Pancreas (tissue), 10 donors: ENCODE measurements at regions of chr2 and their contacts with region 1.

Region 1: GRCh38 chr2:134118279-134119116 is 135.4 kb upstream of the MGAT5 start:
- DNase-seq: peak in 5 of 6 donors; percentile 67 to 87 (median 78)
- ATAC-seq: peak; percentile 51 to 78 (median 66)
- H3K4me3 ChIP-seq: no peak overlapping the region
- H3K27ac ChIP-seq: peak overlapping the region in 2 of 4 donors; percentile 23 to 53
- H3K4me1 ChIP-seq: peaks cover 8 to 25% (median 15%) of the 10 kb centered on the region in 3 donors
- H3K27me3 ChIP-seq: no peaks in the 10 kb centered on the region
- CTCF ChIP-seq: peak; percentile 30 to 61 (median 57)

Region 2: GRCh38 chr2:133927894-133928464 is 190.5 kb before region 1 on chr2:
- intact Hi-C with region 1: no loop called
- DNase-seq: no peak
- ATAC-seq: no peak
- H3K4me3 ChIP-seq: no peak overlapping the region
- H3K27ac ChIP-seq: no peak overlapping the region
- H3K4me1 ChIP-seq: no peaks in the 10 kb centered on the region
- H3K27me3 ChIP-seq: no peaks in the 10 kb centered on the region
- CTCF ChIP-seq: no peak

Region 3: DNA sequence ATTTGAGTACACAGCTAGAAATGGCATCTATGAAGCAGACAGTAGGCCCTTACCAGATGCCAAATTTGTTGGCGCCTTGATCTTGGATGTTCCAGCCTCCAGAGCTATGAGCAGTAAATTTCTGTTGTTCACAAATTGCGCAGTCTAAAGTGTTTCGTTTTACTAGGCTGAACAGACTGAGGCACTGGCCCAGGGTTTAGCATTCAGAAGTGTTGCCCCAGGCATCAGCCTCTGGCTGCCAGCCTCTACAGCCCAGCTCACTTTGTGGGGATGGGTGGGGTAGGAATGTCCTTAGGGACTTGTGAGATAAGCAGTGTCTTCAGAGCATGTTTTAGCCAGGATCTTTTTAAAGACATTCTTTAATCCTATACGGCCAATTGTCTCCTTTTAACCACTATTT is 83.9 kb after region 1 on chr2:
- intact Hi-C with region 1: loop called in 1 of 3 experiments (anchors 5 kb)
- DNase-seq: no peak
- ATAC-seq: no peak
- H3K4me3 ChIP-seq: no peak overlapping the region
- H3K27ac ChIP-seq: no peak overlapping the region
- H3K4me1 ChIP-seq: peaks cover 7 to 57% (median 10%) of the 10 kb centered on the region in 3 donors
- H3K27me3 ChIP-seq: no peaks in the 10 kb centered on the region
- CTCF ChIP-seq: no peak

Region 4: DNA sequence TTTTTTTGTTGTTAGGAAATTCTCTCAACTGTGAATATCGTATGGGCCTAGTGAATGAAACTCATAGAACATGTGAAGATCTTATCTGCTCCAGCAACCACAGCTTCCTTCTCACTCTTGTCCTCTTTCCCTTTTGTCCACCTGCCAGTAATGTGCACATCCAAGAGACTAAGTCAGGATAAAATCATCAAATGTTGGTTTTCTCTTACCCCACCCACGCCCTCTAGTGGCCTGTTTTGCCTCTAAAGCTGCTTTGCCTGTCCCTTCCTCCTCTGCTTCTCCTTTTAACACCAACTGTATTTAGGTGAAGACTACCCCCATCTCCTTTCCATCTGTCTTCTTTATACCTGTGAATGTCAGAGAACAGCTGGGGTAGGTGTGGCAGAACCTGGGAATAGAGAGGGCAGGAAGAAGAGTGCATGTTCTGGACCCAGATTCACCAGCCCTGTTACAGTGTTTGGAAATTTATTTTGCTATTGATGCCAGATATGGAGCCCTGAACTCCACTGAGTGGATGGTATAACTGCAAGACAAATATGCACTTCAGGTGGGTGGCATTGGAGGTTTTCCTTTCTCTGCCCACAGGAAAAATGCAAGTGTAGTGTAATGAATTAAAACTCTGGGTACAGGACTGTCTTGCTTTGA is 127.0 kb after region 1 on chr2:
- intact Hi-C with region 1: loop called in 2 of 3 experiments (anchors 10 kb)
- DNase-seq: peak in 5 of 6 donors; percentile 57 to 84 (median 73)
- ATAC-seq: peak; percentile 70 to 88 (median 86)
- H3K4me3 ChIP-seq: no peak overlapping the region
- H3K27ac ChIP-seq: no peak overlapping the region
- H3K4me1 ChIP-seq: peaks cover 0 to 5% (median 4%) of the 10 kb centered on the region in 3 donors
- H3K27me3 ChIP-seq: no peaks in the 10 kb centered on the region
- CTCF ChIP-seq: peak; percentile 55 to 76 (median 62)

Region 5: DNA sequence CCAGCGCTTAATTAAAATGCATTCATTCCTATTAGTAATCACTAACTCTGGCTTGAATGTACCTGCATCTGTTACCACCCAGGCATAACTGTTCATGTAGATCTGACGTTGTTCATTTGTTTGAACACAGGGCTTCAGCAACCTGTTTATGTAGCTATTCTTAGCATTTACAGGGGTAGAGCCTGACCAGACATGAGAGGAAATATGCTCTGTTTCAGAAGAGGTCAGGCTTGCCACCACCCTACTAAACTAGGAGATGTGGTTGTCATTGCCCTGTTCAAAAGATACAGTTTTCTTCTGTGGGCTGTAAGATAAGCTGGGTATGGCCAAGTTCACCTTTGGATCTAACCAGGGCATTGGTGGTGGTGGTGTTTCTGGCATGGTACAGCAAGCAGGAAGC is 144.2 kb after region 1 on chr2:
- intact Hi-C with region 1: no loop called
- DNase-seq: no peak
- ATAC-seq: peak in 2 of 4 donors; percentile 27 to 29
- H3K4me3 ChIP-seq: no peak overlapping the region
- H3K27ac ChIP-seq: no peak overlapping the region
- H3K4me1 ChIP-seq: peaks cover 5 to 11% (median 9%) of the 10 kb centered on the region in 3 donors
- H3K27me3 ChIP-seq: no peaks in the 10 kb centered on the region
- CTCF ChIP-seq: no peak

Region 6: GRCh38 chr2:134411828-134412638 is 293.5 kb after region 1 on chr2:
- intact Hi-C with region 1: loop called in 1 of 3 experiments (anchors 10 kb)
- DNase-seq: peak in 4 of 6 donors; percentile 53 to 76 (median 67)
- ATAC-seq: peak; percentile 84 to 98 (median 97)
- H3K4me3 ChIP-seq: no peak overlapping the region
- H3K27ac ChIP-seq: peak overlapping the region; percentile 15 to 51 (median 38)
- H3K4me1 ChIP-seq: peaks cover 0 to 17% (median 0%) of the 10 kb centered on the region in 3 donors
- H3K27me3 ChIP-seq: no peaks in the 10 kb centered on the region
- CTCF ChIP-seq: peak in 3 of 4 donors; percentile 29 to 43 (median 38)

Region 7: DNA sequence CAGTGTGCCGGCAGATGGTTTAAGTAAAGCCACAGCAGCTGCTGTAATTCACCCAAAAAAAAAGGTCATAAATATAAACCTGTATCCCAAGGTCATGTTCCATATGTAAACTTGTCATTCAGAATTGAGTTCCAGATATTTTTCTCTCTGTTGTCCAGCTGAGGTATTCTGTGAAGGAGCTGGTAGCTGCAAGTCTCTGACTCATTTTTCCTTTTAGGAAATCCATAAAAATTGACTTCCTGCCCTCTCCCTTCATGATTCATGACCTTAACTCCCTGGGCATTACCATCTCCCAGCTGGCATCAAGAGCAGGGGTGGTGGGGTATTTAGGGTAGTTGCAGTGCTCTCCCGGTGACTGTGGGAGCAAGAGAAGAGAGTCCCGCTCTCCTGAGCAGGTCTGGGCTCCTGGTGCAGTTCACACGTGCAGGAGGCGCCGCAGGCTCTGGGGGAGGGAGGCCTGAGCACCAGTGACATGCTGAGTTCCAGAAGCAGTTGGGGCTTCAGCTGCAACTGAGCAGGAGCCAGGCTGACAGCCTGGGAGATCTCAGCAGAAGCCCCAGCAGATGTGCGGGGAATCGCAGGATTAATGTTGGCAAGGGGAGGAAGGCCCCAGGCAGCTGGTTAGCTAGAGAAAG is 328.0 kb after region 1 on chr2:
- intact Hi-C with region 1: loop called in 1 of 3 experiments (anchors 10 kb)
- DNase-seq: no peak
- ATAC-seq: peak in 1 of 4 donors; percentile 2
- H3K4me3 ChIP-seq: no peak overlapping the region
- H3K27ac ChIP-seq: peak overlapping the region in 3 of 4 donors; percentile 8 to 42 (median 28)
- H3K4me1 ChIP-seq: peaks cover 6 to 19% (median 13%) of the 10 kb centered on the region in 3 donors
- H3K27me3 ChIP-seq: no peaks in the 10 kb centered on the region
- CTCF ChIP-seq: no peak